Left colon (tissue), 2 donors: ENCODE measurements at regions of chr1 and their contacts with region 1.

Region 1: GRCh38 chr1:190098756-190099155 is 378.9 kb downstream of the BRINP3 start:
- DNase-seq: no peak
- ATAC-seq: no peak

Region 2: DNA sequence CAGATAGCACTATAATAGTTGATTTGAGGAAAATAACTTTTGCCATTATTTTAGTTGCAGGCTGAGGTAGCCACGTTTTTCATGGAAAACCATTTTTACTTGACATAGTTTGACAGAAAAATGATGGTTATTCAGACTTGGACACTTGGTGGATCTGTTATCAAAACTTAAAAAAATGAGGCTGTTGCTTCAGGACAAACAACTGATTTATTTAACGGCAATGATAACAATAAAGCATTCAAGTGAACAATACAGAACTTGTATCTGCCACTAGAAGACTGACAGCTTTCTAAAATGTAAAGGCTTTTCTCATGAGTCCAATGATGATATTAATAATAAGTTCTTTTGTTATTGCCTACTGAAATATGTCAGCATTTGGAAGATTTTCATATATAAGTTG is 56.0 kb after region 1 on chr1:
- intact Hi-C with region 1: loop called in 1 of 2 experiments (anchors 5 kb)
- DNase-seq: no peak
- ATAC-seq: no peak